CD8-positive, alpha-beta memory T cell (primary cell): ENCODE measurements at regions of chr6 and their contacts with region 1.

Region 1: DNA sequence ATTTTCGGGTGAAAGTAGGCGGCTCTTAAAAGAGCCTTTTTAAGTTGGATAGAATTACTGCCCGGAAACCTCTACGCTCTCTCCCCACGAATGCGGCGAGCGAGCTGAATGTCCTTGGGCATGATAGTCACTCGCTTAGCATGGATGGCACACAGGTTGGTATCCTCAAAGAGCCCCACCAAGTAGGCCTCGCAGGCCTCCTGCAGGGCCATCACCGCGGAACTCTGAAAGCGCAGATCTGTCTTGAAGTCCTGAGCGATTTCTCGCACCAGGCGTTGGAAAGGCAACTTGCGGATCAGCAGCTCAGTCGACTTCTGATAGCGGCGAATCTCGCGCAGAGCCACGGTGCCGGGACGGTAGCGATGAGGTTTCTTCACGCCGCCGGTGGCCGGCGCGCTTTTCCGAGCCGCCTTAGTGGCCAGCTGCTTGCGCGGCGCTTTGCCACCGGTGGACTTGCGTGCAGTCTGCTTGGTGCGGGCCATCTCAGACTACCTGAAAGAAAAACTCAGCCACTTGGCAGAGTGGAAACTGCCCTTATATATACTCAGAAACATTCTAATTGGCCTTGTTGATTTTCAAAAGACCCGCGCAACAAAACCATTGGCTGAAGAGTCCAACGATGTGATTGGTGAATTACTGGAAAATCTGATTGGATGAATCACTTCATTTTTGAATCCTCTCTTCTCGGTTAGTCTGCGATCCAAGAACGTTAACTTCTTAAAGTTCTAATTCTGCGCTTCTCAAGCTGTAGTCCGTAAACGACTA is 93.9 kb upstream of the BTN3A2 start:
- DNase-seq: peak; percentile 61 to 84 (median 82)
- H3K4me3 ChIP-seq: peak overlapping the region; percentile 70
- H3K4me3 Mint-ChIP-seq: no peak overlapping the region
- H3K27ac ChIP-seq: peak overlapping the region; percentile 40
- H3K27ac Mint-ChIP-seq: peak overlapping the region in 5 of 8 donors; percentile 16 to 98 (median 41)
- H3K4me1 ChIP-seq: peaks cover 23% of the 10 kb centered on the region
- H3K4me1 Mint-ChIP-seq: peaks cover 19 to 29% (median 22%) of the 10 kb centered on the region in 3 donors
- H3K27me3 ChIP-seq: no peaks in the 10 kb centered on the region
- H3K27me3 Mint-ChIP-seq: peaks cover 0 to 10% of the 10 kb centered on the region in 2 donors

Region 2: GRCh38 chr6:26025894-26026832 is 244.9 kb before region 1 on chr6:
- CTCF ChIA-PET with region 1: no interaction called
- POLR2A ChIA-PET with region 1: interaction called, 16 read pairs
- DNase-seq: peak; percentile 86 to 95 (median 94)
- H3K4me3 ChIP-seq: peak overlapping the region; percentile 59
- H3K4me3 Mint-ChIP-seq: peak overlapping the region; percentile 85 to 95 (median 93)
- H3K27ac ChIP-seq: peak overlapping the region; percentile 86
- H3K27ac Mint-ChIP-seq: peak overlapping the region; percentile 93 to 100 (median 98)
- H3K4me1 ChIP-seq: peaks cover 21% of the 10 kb centered on the region
- H3K4me1 Mint-ChIP-seq: peaks cover 30 to 77% (median 55%) of the 10 kb centered on the region in 3 donors
- H3K27me3 ChIP-seq: no peaks in the 10 kb centered on the region
- H3K27me3 Mint-ChIP-seq: peaks cover 0 to 9% of the 10 kb centered on the region in 2 donors

Region 3: DNA sequence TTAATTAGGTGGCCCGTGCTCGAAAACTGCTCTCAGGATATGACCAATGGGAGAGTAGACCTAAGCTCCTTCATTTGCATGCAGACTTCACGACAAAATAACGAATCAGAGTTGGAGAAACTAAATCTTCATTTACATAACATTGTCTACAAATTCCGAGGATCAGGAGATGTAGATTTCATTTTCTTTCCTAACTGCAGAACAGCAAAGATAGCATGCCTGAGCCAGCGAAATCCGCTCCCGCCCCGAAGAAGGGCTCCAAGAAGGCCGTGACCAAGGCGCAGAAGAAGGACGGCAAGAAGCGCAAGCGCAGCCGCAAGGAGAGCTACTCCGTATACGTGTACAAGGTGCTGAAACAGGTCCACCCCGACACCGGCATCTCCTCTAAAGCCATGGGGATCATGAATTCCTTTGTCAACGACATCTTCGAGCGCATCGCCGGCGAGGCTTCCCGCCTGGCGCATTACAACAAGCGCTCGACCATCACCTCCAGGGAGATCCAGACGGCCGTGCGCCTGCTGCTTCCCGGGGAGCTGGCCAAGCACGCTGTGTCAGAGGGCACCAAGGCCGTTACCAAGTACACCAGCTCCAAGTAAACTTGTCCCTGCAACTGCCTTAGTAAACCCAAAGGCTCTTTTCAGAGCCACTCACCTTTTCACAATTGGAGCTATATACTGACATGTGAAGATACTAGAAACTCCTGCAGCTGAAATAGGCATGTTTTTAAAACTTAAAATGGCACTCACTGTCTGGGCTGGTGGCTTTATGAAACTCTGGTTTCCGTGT is 87.3 kb before region 1 on chr6:
- CTCF ChIA-PET with region 1: interaction called, 15 read pairs
- POLR2A ChIA-PET with region 1: interaction called, 31 read pairs
- DNase-seq: peak; percentile 31 to 78 (median 72)
- H3K4me3 ChIP-seq: peak overlapping the region; percentile 81
- H3K4me3 Mint-ChIP-seq: peak overlapping the region; percentile 86 to 99 (median 97)
- H3K27ac ChIP-seq: peak overlapping the region; percentile 71
- H3K27ac Mint-ChIP-seq: peak overlapping the region; percentile 71 to 99 (median 96)
- H3K4me1 ChIP-seq: peaks cover 33% of the 10 kb centered on the region
- H3K4me1 Mint-ChIP-seq: peaks cover 41 to 53% (median 44%) of the 10 kb centered on the region in 3 donors
- H3K27me3 ChIP-seq: no peaks in the 10 kb centered on the region
- H3K27me3 Mint-ChIP-seq: no peaks in the 10 kb centered on the region

Region 4: DNA sequence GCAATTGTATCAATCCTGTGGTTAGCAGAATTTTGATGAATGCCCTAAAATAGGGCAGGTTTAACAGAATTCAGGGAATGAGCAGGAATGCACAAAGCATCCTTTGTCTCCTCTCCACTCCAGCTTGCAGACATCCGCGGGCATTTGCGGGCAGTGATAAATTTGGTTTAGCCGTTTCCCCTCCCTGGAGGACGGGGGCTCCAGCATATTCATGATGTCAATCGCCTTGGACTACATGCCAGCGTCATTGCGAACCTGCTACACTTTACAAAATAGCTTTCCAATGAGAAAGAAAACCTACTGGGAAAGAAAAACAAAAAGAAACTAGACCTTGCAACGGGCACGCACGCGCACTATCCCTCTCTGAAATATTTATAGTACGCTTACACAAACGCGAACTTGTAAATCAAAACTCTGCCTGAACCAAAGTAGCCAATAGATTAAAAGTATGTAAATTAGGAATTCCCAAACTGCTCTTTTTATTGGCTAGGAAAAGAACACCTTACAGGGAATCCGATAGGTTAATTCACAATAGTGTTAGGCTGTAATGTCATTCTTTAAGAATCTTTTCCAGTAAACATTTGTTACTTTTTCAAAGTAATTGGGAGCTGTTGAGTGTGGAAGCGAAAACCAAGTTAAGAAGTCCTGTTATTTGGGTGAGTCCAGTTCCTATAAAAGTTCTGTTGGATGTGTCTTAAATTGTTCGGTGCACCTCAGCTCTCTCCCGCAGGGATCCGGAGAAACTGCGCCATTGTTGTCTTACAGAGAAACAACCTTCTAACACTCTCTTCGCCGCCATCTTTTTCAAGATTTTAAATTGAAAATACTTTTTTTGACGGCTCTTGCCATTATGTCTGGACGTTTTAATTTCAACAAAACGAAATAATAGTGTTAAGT is 47.2 kb before region 1 on chr6:
- CTCF ChIA-PET with region 1: interaction called, 7 read pairs
- POLR2A ChIA-PET with region 1: interaction called, 16 read pairs
- DNase-seq: peak; percentile 57 to 83 (median 78)
- H3K4me3 ChIP-seq: peak overlapping the region; percentile 87
- H3K4me3 Mint-ChIP-seq: no peak overlapping the region
- H3K27ac ChIP-seq: peak overlapping the region; percentile 72
- H3K27ac Mint-ChIP-seq: no peak overlapping the region
- H3K4me1 ChIP-seq: peaks cover 17% of the 10 kb centered on the region
- H3K4me1 Mint-ChIP-seq: peaks cover under 1 to 7% (median 7%) of the 10 kb centered on the region in 3 donors
- H3K27me3 ChIP-seq: no peaks in the 10 kb centered on the region
- H3K27me3 Mint-ChIP-seq: no peaks in the 10 kb centered on the region

Region 5: DNA sequence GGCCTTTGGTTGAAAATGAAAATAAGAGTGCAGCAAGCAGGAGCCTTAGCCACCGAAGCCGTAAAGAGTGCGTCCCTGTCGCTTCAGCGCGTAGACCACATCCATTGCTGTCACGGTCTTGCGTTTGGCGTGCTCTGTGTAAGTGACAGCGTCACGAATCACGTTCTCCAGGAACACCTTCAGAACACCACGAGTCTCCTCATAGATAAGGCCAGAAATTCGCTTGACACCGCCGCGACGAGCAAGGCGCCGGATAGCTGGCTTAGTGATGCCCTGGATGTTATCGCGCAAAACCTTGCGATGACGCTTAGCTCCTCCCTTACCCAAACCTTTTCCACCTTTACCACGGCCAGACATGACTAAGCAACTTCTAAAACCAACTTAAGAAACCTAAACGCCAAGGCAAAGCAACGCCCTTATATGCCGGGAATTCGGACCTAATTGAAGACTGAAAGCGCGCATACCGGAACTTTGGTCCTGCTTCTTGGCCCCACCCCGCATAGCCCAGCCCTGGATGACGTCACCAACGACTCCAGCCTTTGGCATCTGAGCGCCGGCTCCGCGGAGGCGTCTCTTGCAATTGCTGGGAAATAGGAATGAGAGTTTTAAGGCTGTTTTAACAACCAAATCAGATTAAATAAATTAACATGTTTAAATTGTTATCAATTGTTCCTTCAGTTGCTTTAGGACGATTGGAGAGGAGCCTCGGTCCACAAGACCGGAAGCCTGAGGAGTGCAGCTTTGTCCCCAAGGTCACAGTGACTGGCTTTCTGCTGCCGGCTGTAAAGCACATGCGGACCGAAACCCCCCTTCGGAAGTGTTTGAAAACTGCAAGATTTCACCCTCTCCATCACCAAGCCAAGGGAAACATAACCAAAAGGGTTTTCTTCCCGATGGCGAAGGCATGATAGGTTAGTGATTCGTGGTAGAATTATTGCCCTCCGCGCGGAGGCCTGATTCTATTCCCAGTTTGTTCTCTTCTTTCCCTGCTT is 14.4 kb after region 1 on chr6:
- CTCF ChIA-PET with region 1: interaction called, 76 read pairs
- POLR2A ChIA-PET with region 1: interaction called, 200 read pairs
- DNase-seq: peak; percentile 89 to 98 (median 91)
- H3K4me3 ChIP-seq: peak overlapping the region; percentile 75
- H3K4me3 Mint-ChIP-seq: peak overlapping the region; percentile 83 to 97 (median 89)
- H3K27ac ChIP-seq: peak overlapping the region; percentile 97
- H3K27ac Mint-ChIP-seq: peak overlapping the region; percentile 93 to 98 (median 98)
- H3K4me1 ChIP-seq: peaks cover 15% of the 10 kb centered on the region
- H3K4me1 Mint-ChIP-seq: peaks cover 22 to 29% (median 23%) of the 10 kb centered on the region in 3 donors
- H3K27me3 ChIP-seq: no peaks in the 10 kb centered on the region
- H3K27me3 Mint-ChIP-seq: peaks cover 0 to 20% of the 10 kb centered on the region in 2 donors

Region 6: GRCh38 chr6:26596579-26597388 is 325.7 kb after region 1 on chr6 and contains the start of gene ABT1:
- CTCF ChIA-PET with region 1: interaction called, 11 read pairs
- POLR2A ChIA-PET with region 1: no interaction called
- DNase-seq: peak; percentile 94 to 97 (median 96)
- H3K4me3 ChIP-seq: peak within 1 kb of the TSS; percentile 72
- H3K4me3 Mint-ChIP-seq: no peak within 1 kb of the TSS
- H3K27ac ChIP-seq: peak within 1 kb of the TSS; percentile 90
- H3K27ac Mint-ChIP-seq: no peak within 1 kb of the TSS
- H3K4me1 ChIP-seq: peaks cover 21% of the 10 kb centered on the region
- H3K4me1 Mint-ChIP-seq: peaks cover 8 to 13% (median 9%) of the 10 kb centered on the region in 3 donors
- H3K27me3 ChIP-seq: peaks cover 5% of the 10 kb centered on the region
- H3K27me3 Mint-ChIP-seq: peaks cover 0 to 30% of the 10 kb centered on the region in 2 donors
- total RNA-seq, gene ABT1: 34.5 to 36.1 TPM